GM13977 (cell line): ENCODE measurements at regions of chr18 and their contacts with region 1.

Region 1: GRCh38 chr18:77207540-77207939 is 42.1 kb upstream of the GALR1 start:
- DNase-seq: no peak
- CTCF ChIP-seq: peak; percentile 27

Region 2: DNA sequence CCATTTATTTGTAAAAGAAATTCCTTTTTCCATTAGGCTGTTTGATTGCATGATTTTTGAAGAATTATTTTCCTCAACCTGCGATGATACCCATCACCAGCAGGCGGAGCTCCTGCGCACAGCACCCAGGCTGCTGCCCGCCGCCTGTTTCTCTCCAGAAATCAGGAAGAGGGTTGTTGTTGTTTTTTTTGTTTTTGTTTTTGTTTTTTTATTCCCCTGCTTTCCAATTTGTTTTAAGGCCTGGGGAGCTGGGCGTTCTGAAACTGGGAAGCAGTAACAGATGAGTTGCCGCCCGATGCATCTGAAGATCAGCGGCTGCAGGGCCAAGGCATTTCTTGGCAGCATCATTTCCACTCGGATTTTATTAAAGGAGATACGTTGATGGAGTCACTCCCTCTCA is 207.0 kb before region 1 on chr18:
- in situ Hi-C with region 1: loop called (anchors 25 kb)
- DNase-seq: peak; percentile 78
- CTCF ChIP-seq: peak; percentile 93